HepG2 (cell line): ENCODE measurements at regions of chr2 and their contacts with region 1.

Region 1: GRCh38 chr2:72713857-72714256 is 112.0 kb downstream of the EXOC6B start:
- DNase-seq: peak; percentile 33
- ATAC-seq: peak; percentile 70
- H3K4me3 ChIP-seq: no peak overlapping the region
- H3K27ac ChIP-seq: no peak overlapping the region
- H3K4me1 ChIP-seq: peaks cover 14% of the 10 kb centered on the region
- H3K27me3 ChIP-seq: no peaks in the 10 kb centered on the region
- CTCF ChIP-seq: no peak
- EP300 ChIP-seq: no peak
- POLR2A ChIP-seq: no peak
- RAD21 ChIP-seq: no peak

Region 2: GRCh38 chr2:71910277-71910676 is 803.6 kb before region 1 on chr2:
- CTCF ChIA-PET with region 1: no interaction called
- POLR2A ChIA-PET with region 1: no interaction called
- in situ Hi-C with region 1: no loop called
- intact Hi-C with region 1: no loop called
- DNase-seq: no peak
- ATAC-seq: no peak
- H3K4me3 ChIP-seq: no peak overlapping the region
- H3K27ac ChIP-seq: no peak overlapping the region
- H3K4me1 ChIP-seq: no peaks in the 10 kb centered on the region
- H3K27me3 ChIP-seq: 0 out of 5 replicates have a peak, but pooled peaks cover 0 to 3% of the 10 kb centered on the region in 2 experiments
- CTCF ChIP-seq: no peak
- EP300 ChIP-seq: no peak
- POLR2A ChIP-seq: no peak
- RAD21 ChIP-seq: no peak

Region 3: GRCh38 chr2:72678024-72678423 is 35.8 kb before region 1 on chr2:
- CTCF ChIA-PET with region 1: no interaction called
- POLR2A ChIA-PET with region 1: no interaction called
- in situ Hi-C with region 1: no loop called
- intact Hi-C with region 1: loop called (anchors 5 kb)
- DNase-seq: no peak
- ATAC-seq: no peak
- H3K4me3 ChIP-seq: no peak overlapping the region
- H3K27ac ChIP-seq: no peak overlapping the region
- H3K4me1 ChIP-seq: peaks cover 62% of the 10 kb centered on the region
- H3K27me3 ChIP-seq: no peaks in the 10 kb centered on the region
- CTCF ChIP-seq: no peak
- EP300 ChIP-seq: no peak
- POLR2A ChIP-seq: no peak
- RAD21 ChIP-seq: no peak

Region 4: DNA sequence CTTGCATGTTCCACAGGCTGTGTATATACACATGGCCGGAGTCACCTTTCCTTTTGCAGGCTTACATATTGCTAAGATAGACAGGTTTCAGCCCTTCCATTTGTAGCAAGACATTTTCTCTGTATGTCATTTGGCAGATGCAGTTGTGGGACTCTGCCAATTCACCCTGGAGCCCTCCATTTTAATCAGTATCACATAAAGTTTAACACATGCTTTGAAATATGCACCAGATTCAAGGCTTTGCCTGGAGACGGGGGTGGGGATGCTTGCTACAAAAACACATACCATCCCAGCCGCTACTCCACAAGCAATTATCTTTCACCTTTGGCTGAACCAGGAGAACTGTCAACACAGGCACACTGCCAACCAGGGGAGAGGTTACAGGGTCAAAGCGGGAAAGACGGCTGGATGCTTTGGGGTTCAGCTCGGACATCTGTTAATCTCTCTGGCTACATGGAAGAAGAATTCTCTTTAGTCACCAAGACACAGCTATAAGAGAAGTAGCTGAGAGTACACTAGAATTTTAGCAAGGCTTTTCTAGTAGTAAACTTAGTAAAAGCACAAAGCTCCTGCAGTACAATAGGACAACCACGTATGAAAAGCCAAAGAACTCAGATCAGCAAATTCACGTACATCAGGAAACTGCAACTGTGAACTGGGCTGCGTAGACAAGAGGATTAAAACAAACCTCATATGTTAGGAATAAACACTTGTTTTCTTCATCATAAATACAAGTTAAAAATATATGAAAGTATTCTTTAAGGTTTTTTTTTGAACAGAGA is 19.0 kb before region 1 on chr2:
- CTCF ChIA-PET with region 1: no interaction called
- POLR2A ChIA-PET with region 1: no interaction called
- in situ Hi-C with region 1: no loop called
- intact Hi-C with region 1: no loop called
- DNase-seq: peak; percentile 94
- ATAC-seq: peak; percentile 97
- H3K4me3 ChIP-seq: no peak overlapping the region
- H3K27ac ChIP-seq: no peak overlapping the region
- H3K4me1 ChIP-seq: peaks cover 21% of the 10 kb centered on the region
- H3K27me3 ChIP-seq: no peaks in the 10 kb centered on the region
- CTCF ChIP-seq: no peak
- EP300 ChIP-seq: peak in 1 of 2 experiments; percentile 88; a peak in 2 of 4 replicates
- POLR2A ChIP-seq: no peak
- RAD21 ChIP-seq: no peak

Region 5: GRCh38 chr2:72833084-72833709 is 119.3 kb after region 1 on chr2:
- CTCF ChIA-PET with region 1: no interaction called
- POLR2A ChIA-PET with region 1: no interaction called
- in situ Hi-C with region 1: no loop called
- intact Hi-C with region 1: no loop called
- DNase-seq: no peak
- ATAC-seq: no peak
- H3K4me3 ChIP-seq: no peak overlapping the region
- H3K27ac ChIP-seq: no peak overlapping the region
- H3K4me1 ChIP-seq: peaks cover 21% of the 10 kb centered on the region
- H3K27me3 ChIP-seq: peaks cover 2 to 6% of the 10 kb centered on the region in 2 experiments; a peak in 2 of 5 replicates
- CTCF ChIP-seq: no peak
- EP300 ChIP-seq: no peak
- POLR2A ChIP-seq: no peak
- RAD21 ChIP-seq: no peak

Region 6: GRCh38 chr2:73187549-73187948 is 473.7 kb after region 1 on chr2:
- CTCF ChIA-PET with region 1: no interaction called
- POLR2A ChIA-PET with region 1: no interaction called
- in situ Hi-C with region 1: no loop called
- intact Hi-C with region 1: no loop called
- DNase-seq: no peak
- ATAC-seq: no peak
- H3K4me3 ChIP-seq: no peak overlapping the region
- H3K27ac ChIP-seq: no peak overlapping the region
- H3K4me1 ChIP-seq: peaks cover 49% of the 10 kb centered on the region
- H3K27me3 ChIP-seq: 0 out of 5 replicates have a peak, but pooled peaks cover 0 to 4% of the 10 kb centered on the region in 2 experiments
- CTCF ChIP-seq: no peak
- EP300 ChIP-seq: no peak
- POLR2A ChIP-seq: no peak
- RAD21 ChIP-seq: no peak